ENCODE measurements at regions of chr2 and their contacts with region 1.

Region 1: GRCh38 chr2:12931186-12931844 is 214.6 kb downstream of the TRIB2 start:
- DNase-seq: no peak
- H3K4me3 ChIP-seq: no peak overlapping the region
- CTCF ChIP-seq: peak; percentile 74

Region 2: GRCh38 chr2:12141618-12142258 is 789.6 kb before region 1 on chr2:
- CTCF ChIA-PET with region 1: no interaction called
- POLR2A ChIA-PET with region 1: no interaction called
- DNase-seq: no peak
- H3K4me3 ChIP-seq: no peak overlapping the region
- CTCF ChIP-seq: no peak

Region 3: GRCh38 chr2:12716282-12717190 is 214.8 kb before region 1 on chr2 and contains the start of gene TRIB2:
- CTCF ChIA-PET with region 1: interaction called, 181 read pairs
- POLR2A ChIA-PET with region 1: interaction called, 6 read pairs
- DNase-seq: no peak
- H3K4me3 ChIP-seq: peak within 1 kb of the TSS; percentile 86
- CTCF ChIP-seq: peak; percentile 10

Region 4: GRCh38 chr2:12733846-12734245 is 197.5 kb before region 1 on chr2:
- CTCF ChIA-PET with region 1: interaction called, 181 read pairs
- POLR2A ChIA-PET with region 1: no interaction called
- DNase-seq: no peak
- H3K4me3 ChIP-seq: no peak overlapping the region
- CTCF ChIP-seq: no peak

Region 5: GRCh38 chr2:12754643-12755042 is 176.7 kb before region 1 on chr2:
- CTCF ChIA-PET with region 1: interaction called, 12 read pairs
- POLR2A ChIA-PET with region 1: no interaction called
- DNase-seq: no peak
- H3K4me3 ChIP-seq: no peak overlapping the region
- CTCF ChIP-seq: no peak

Region 6: DNA sequence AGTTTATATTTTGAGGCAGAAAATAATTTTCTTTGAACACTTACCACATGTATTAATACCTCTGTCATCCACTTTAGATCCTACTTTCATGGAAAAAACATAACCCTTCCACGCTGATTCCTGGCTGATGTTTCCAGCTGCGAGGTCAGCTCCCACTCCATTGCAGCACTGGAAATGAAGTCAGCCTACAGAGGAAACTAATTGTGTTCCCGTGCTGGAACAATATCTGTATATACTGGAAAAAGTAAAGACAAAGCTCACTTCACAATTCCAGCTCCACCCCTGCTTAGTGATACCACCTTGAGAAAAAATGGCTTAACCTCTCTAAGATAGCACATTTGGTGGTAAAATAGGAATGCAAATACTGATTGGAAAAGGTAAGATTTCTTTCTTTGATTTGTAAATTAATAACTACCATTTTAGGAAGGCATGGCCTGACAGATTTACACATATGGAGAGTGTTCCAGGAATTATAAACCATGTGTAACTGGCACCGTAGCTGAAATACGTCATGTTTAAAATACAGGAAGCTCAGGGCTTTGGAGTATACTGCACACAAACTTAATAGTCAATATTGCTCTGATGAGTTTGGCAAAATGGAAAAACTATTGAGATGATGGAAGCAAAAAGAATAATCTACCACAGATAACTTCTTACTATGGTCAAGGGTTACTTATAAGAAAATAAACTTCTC is 124.6 kb before region 1 on chr2:
- CTCF ChIA-PET with region 1: interaction called, 10 read pairs
- POLR2A ChIA-PET with region 1: no interaction called
- DNase-seq: no peak
- H3K4me3 ChIP-seq: no peak overlapping the region
- CTCF ChIP-seq: no peak

Region 7: GRCh38 chr2:12847694-12848575 is 83.4 kb before region 1 on chr2:
- CTCF ChIA-PET with region 1: no interaction called
- POLR2A ChIA-PET with region 1: no interaction called
- DNase-seq: no peak
- H3K4me3 ChIP-seq: no peak overlapping the region
- CTCF ChIP-seq: no peak

Region 8: DNA sequence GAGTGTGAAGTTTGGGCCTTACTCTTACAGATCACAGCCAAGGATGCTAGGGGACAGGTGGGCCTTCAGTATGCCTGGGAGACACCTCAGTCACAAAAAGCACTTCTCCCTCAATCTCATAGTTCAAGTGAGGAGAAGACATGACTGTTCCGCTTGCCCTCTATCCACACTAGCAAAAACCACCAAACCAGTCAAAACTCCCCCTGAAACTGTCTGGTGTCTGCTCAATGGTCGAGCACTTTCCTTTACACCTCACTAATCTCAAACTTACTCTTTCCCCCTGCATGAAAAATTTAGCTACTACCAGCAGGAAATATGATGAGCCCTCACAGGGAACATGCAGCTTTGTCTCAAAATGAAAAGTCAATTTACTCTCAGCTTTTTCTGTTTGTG is 17.6 kb after region 1 on chr2:
- CTCF ChIA-PET with region 1: interaction called, 54 read pairs
- POLR2A ChIA-PET with region 1: no interaction called
- DNase-seq: no peak
- H3K4me3 ChIP-seq: no peak overlapping the region
- CTCF ChIP-seq: no peak

Region 9: DNA sequence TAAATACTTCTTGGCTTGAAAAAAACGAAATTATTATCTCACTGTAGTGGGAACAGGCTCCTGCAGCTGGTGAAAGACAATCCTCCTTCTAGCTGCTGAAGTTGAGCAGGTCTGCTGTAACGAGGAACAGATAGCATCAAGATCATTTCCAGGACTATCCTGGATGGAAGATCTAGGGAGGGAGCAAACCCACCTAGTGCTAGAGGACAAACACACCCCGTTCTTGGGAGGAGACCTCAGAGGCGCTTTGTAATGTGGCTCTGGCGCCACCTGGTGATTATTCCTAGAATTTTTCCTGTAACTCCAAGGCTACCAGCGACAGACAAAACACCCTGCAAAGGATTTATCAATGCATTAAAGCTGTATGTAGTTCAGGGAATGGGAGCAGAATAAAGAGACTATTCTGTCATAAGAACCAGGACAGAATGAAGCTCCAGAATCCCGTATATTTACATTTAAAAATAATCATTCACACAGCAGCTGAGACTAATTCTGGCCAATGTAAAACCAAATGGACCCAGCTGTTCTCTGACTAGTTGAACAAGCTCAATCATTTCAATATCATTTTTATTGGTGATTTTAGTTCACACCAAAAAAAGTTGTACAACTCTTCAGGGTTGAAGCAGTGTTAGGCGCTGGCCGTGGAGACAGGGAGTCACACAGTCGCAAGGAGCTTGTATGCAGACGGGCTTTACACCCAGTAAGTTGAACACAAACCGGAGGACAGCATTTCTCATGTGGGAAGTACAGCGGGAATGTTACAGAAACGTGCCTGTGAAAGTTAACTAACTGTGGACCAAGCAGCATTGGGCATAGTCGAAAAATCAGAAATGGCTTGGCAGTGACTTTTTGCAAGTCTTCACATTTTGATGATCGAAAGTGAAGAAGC is 75.8 kb after region 1 on chr2:
- CTCF ChIA-PET with region 1: interaction called, 48 read pairs
- POLR2A ChIA-PET with region 1: no interaction called
- DNase-seq: peak; percentile 7
- H3K4me3 ChIP-seq: no peak overlapping the region; the same call in 1 of the 2 replicates
- CTCF ChIP-seq: peak; percentile 70

Region 10: GRCh38 chr2:13067508-13067907 is 136.2 kb after region 1 on chr2:
- CTCF ChIA-PET with region 1: no interaction called
- POLR2A ChIA-PET with region 1: no interaction called
- DNase-seq: no peak
- H3K4me3 ChIP-seq: no peak overlapping the region
- CTCF ChIP-seq: no peak

Region 11: GRCh38 chr2:14120376-14120775 is 1189.1 kb after region 1 on chr2:
- CTCF ChIA-PET with region 1: no interaction called
- POLR2A ChIA-PET with region 1: no interaction called
- DNase-seq: no peak
- H3K4me3 ChIP-seq: no peak overlapping the region
- CTCF ChIP-seq: no peak